ENCODE measurements at regions of chr5 and their contacts with region 1.

Region 1: DNA sequence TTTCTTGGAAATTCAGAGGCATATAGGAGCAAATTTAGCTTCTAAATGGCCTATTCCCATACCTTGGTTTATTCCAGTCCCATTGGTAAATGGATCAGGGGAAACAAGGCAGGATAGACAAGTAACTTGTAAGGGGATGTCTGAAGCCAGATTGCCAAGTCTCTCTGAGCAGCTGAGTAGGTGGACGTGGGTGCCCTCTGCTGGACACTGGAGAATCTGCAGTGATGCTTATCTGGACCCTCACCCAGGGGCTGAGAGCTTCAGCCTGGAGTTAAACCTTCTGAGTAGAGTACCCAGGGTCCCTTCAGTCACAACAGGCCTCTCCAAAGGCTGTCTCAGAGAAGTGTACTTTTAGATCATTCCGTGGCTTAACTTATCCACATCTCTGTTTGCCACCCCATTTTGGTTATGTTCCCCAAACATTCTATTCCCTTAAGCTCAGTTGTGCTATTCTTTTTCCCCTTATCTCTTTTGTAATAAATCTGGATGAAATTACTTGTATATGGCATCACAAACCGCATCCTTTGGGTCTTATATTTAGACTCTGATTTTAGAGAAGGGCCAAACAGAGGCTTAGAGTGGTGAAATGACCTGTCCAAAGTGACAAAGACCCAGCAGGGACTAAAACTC is 218.3 kb upstream of the GLRA1 start:
- DNase-seq: peak; percentile 52 to 57 (median 57)
- H3K4me3 ChIP-seq: no peak overlapping the region
- H3K4me3 Mint-ChIP-seq: no peak overlapping the region
- H3K27ac ChIP-seq: no peak overlapping the region
- H3K27ac Mint-ChIP-seq: no peak overlapping the region
- H3K4me1 ChIP-seq: peaks cover 4% of the 10 kb centered on the region
- H3K4me1 Mint-ChIP-seq: peaks cover 0 to 1% (median 0%) of the 10 kb centered on the region in 4 donors
- H3K27me3 ChIP-seq: no peaks in the 10 kb centered on the region
- H3K27me3 Mint-ChIP-seq: peaks cover 0 to 1% of the 10 kb centered on the region in 2 donors

Region 2: GRCh38 chr5:151659001-151659754 is 483.8 kb before region 1 on chr5:
- CTCF ChIA-PET with region 1: interaction called, 14 read pairs
- POLR2A ChIA-PET with region 1: no interaction called
- intact Hi-C with region 1: no loop called
- DNase-seq: peak; percentile 66 to 76 (median 74)
- H3K4me3 ChIP-seq: no peak overlapping the region
- H3K4me3 Mint-ChIP-seq: no peak overlapping the region
- H3K27ac ChIP-seq: no peak overlapping the region
- H3K27ac Mint-ChIP-seq: peak overlapping the region in 1 of 7 donors; percentile 41
- H3K4me1 ChIP-seq: peaks cover 12% of the 10 kb centered on the region
- H3K4me1 Mint-ChIP-seq: peaks cover 4 to 18% (median 6%) of the 10 kb centered on the region in 4 donors
- H3K27me3 ChIP-seq: no peaks in the 10 kb centered on the region
- H3K27me3 Mint-ChIP-seq: peaks cover 0 to 14% of the 10 kb centered on the region in 2 donors

Region 3: GRCh38 chr5:151825445-151825844 is 317.5 kb before region 1 on chr5:
- CTCF ChIA-PET with region 1: interaction called, 438 read pairs
- POLR2A ChIA-PET with region 1: interaction called, 14 read pairs
- intact Hi-C with region 1: loop called (anchors 1 kb)
- DNase-seq: peak; percentile 38 to 50 (median 43)
- H3K4me3 ChIP-seq: no peak overlapping the region
- H3K4me3 Mint-ChIP-seq: no peak overlapping the region
- H3K27ac ChIP-seq: no peak overlapping the region
- H3K27ac Mint-ChIP-seq: peak overlapping the region in 1 of 7 donors; percentile 33
- H3K4me1 ChIP-seq: peaks cover 5% of the 10 kb centered on the region
- H3K4me1 Mint-ChIP-seq: peaks cover 9 to 13% (median 12%) of the 10 kb centered on the region in 4 donors
- H3K27me3 ChIP-seq: no peaks in the 10 kb centered on the region
- H3K27me3 Mint-ChIP-seq: no peaks in the 10 kb centered on the region

Region 4: GRCh38 chr5:151949909-151950308 is 193.0 kb before region 1 on chr5:
- CTCF ChIA-PET with region 1: interaction called, 3 read pairs
- POLR2A ChIA-PET with region 1: no interaction called
- intact Hi-C with region 1: loop called (anchors 5 kb)
- DNase-seq: no peak
- H3K4me3 ChIP-seq: no peak overlapping the region
- H3K4me3 Mint-ChIP-seq: peak overlapping the region in 3 of 8 donors; percentile 21 to 61 (median 47)
- H3K27ac ChIP-seq: no peak overlapping the region
- H3K27ac Mint-ChIP-seq: no peak overlapping the region
- H3K4me1 ChIP-seq: peaks cover 34% of the 10 kb centered on the region
- H3K4me1 Mint-ChIP-seq: peaks cover 29 to 65% (median 46%) of the 10 kb centered on the region in 4 donors
- H3K27me3 ChIP-seq: no peaks in the 10 kb centered on the region
- H3K27me3 Mint-ChIP-seq: peaks cover 0 to 3% of the 10 kb centered on the region in 2 donors

Region 5: DNA sequence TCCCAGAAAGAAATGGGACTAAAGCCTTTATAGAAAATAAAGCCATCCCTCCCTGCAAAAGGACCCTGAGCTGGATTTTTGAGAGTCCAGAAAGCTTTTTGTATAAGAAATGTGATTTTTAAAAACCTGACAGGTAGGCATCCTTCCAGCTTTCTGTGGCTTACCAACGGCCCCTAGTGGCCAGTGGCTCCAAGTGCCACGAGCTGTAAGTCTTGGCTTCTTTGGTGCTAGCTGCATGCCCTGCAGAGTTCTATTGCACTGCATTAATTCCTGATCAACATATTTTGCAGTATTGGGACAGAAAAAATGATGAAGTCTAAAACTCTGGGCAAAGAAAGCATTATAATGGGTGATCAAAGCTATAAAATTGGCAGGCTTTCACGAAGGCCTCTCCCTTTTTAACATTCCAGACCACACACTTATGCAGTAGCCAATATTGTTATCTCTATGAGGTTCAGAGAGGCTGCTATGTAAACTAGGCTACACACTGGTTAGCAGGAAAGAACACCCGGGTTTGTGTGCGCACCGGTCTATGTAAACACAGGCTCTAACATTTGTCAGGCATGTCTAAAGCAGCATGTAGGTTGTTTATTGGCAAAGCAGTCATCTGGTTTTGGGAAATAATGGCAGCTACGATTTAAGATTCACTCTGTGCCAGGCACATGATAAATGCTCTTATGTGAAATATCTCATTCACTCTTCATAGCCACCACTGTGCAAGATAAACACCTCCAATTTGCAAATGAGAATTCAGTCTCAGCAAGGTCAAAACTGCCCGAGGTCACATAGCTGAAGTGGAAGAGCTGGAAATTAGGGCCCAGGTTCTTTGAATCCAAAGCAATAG is 206.9 kb after region 1 on chr5:
- CTCF ChIA-PET with region 1: interaction called, 25 read pairs
- POLR2A ChIA-PET with region 1: no interaction called
- intact Hi-C with region 1: loop called (anchors 5 kb)
- DNase-seq: peak in 4 of 5 donors; percentile 12 to 30 (median 20)
- H3K4me3 ChIP-seq: no peak overlapping the region
- H3K4me3 Mint-ChIP-seq: no peak overlapping the region
- H3K27ac ChIP-seq: no peak overlapping the region
- H3K27ac Mint-ChIP-seq: no peak overlapping the region
- H3K4me1 ChIP-seq: no peaks in the 10 kb centered on the region
- H3K4me1 Mint-ChIP-seq: no peaks in the 10 kb centered on the region
- H3K27me3 ChIP-seq: no peaks in the 10 kb centered on the region
- H3K27me3 Mint-ChIP-seq: peaks cover 3 to 8% of the 10 kb centered on the region in 2 donors

Measured in CD4-positive, alpha-beta memory T cell (primary cell).